K562 (cell line): ENCODE measurements at regions of chr3 and their contacts with region 1.

Region 1: DNA sequence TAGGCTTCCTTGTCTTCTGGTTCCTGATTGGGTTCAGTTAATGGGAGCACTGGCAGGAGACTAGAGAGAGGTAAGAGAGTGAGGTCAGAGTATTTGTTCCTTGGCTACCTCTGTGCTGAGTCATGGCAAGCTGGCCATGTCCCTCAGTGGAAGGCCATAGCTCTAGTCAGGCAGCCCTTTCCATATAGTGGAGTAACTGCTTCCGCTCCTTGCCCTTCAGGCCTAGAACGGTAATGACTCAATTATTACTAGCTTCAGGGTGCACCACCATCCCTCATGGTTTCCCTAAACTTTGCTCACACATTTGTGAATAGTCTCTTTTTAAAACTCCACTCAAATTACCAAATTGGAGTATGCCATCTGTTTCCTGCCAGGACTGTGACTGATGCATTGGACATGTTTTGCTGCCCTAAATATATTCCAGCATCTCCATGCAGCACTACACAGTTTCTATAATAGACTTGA is 10.5 kb upstream of the ANO10 start:
- DNase-seq: peak; percentile 35 to 82 (median 60)
- ATAC-seq: peak; percentile 98
- H3K4me3 ChIP-seq: no peak overlapping the region
- H3K27ac ChIP-seq: peak overlapping the region; percentile 63
- H3K4me1 ChIP-seq: peaks cover 0 to 15% of the 10 kb centered on the region in 2 experiments; a peak in 4 of 5 replicates
- H3K27me3 ChIP-seq: no peaks in the 10 kb centered on the region; a peak in 1 of 5 replicates
- CTCF ChIP-seq: 0 out of 6 replicates have a peak, but pooled peaks of 1 of the 3 experiments have one; percentile 10
- EP300 ChIP-seq: no peak
- POLR2A ChIP-seq: no peak
- RAD21 ChIP-seq: peak in 1 of 2 experiments; percentile 31; a peak in 2 of 4 replicates

Region 2: GRCh38 chr3:43690400-43691119 is 58.3 kb after region 1 on chr3 and contains the start of gene ABHD5:
- CTCF ChIA-PET with region 1: no interaction called
- POLR2A ChIA-PET with region 1: no interaction called
- in situ Hi-C with region 1: no loop called
- intact Hi-C with region 1: no loop called
- DNase-seq: peak; percentile 95 to 99 (median 96)
- ATAC-seq: peak; percentile 82
- H3K4me3 ChIP-seq: peak within 1 kb of the TSS; percentile 80
- H3K27ac ChIP-seq: peak within 1 kb of the TSS; percentile 91
- H3K4me1 ChIP-seq: peaks cover 48 to 63% of the 10 kb centered on the region in 2 experiments
- H3K27me3 ChIP-seq: no peaks in the 10 kb centered on the region
- CTCF ChIP-seq: peak; percentile 42 to 69 (median 60)
- EP300 ChIP-seq: peak; percentile 13
- POLR2A ChIP-seq: peak; percentile 98
- RAD21 ChIP-seq: peak; percentile 50 to 52
- polyA plus RNA-seq, gene ABHD5: 31.9 to 35.0 TPM

Region 3: DNA sequence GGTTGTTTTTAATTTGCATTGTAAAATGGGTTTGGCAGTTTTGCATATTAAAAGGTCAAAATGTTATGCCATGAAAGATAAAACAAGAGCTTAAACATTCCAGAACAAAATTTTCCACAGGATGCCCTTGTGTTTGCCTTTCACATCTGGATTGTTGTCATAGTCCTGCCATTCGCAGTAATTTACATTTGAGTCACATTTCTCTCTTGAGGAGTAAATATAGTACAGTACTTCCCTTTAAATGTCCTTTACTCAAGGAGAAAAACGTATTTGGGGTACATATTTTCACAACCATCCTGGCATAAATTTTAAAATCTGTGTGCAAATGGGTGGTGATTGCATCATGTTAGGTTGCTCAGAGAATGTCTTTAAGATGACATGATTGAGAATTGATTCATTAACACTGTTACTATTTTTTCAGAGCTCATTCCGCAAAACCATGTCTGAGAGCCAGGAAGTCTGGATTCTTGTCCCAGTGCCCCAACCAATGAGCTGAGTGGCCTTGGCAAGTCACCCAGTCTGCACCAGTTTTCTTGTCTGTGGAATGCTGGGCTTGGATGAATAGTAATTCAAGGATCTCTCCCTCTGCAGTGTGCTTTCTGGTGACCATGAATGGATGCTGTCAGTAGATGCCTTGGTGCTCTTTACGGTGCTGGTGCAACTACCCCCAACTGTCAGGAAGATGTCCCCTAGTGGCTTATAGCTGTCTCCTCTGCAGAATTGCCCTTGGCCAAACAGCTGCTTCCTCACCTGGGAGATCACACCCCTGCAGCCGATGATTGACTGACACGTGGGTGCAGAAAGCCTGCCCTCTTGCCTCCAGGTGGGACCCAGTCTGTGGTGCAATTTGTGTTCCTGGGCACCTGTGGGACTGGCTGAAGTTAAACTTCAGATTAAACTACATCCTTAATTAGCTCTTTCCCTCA is 101.4 kb after region 1 on chr3:
- CTCF ChIA-PET with region 1: no interaction called
- POLR2A ChIA-PET with region 1: no interaction called
- in situ Hi-C with region 1: no loop called
- intact Hi-C with region 1: no loop called
- DNase-seq: peak in 1 of 4 experiments; percentile 36
- ATAC-seq: no peak
- H3K4me3 ChIP-seq: no peak overlapping the region
- H3K27ac ChIP-seq: no peak overlapping the region
- H3K4me1 ChIP-seq: peaks cover 0 to 12% of the 10 kb centered on the region in 2 experiments; a peak in 3 of 5 replicates
- H3K27me3 ChIP-seq: no peaks in the 10 kb centered on the region
- CTCF ChIP-seq: no peak
- EP300 ChIP-seq: no peak
- POLR2A ChIP-seq: no peak
- RAD21 ChIP-seq: no peak

Region 4: GRCh38 chr3:43759297-43759782 is 127.0 kb after region 1 on chr3:
- CTCF ChIA-PET with region 1: no interaction called
- POLR2A ChIA-PET with region 1: no interaction called
- in situ Hi-C with region 1: no loop called
- intact Hi-C with region 1: loop called (anchors 5 kb)
- DNase-seq: peak in 2 of 4 experiments; percentile 49 to 50
- ATAC-seq: peak; percentile 84
- H3K4me3 ChIP-seq: no peak overlapping the region
- H3K27ac ChIP-seq: no peak overlapping the region
- H3K4me1 ChIP-seq: peaks cover 0 to 8% of the 10 kb centered on the region in 2 experiments; a peak in 3 of 5 replicates
- H3K27me3 ChIP-seq: no peaks in the 10 kb centered on the region; a peak in 1 of 5 replicates
- CTCF ChIP-seq: peak; percentile 55 to 69 (median 62)
- EP300 ChIP-seq: no peak
- POLR2A ChIP-seq: no peak
- RAD21 ChIP-seq: peak; percentile 47 to 68